ENCODE measurements at regions of chr21 and their contacts with region 1.

Region 1: DNA sequence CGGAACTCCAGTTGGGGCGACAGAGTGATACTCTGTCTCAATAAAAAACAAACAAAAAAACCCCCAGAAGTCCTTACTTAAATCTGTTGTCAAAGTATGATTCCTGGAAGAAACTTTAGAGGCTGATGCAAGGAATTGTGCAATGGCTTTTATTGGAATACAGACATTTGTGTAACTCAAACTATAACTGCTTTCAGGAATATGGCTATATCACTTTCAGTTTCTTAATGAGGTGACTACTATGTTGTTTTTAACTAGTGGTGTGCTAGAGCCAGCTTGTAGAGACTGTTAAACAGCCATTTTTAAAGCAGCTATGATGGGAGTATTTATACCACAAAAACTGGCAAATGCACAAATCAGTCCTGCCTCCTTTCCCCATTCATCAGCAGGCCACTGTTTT is 22.7 kb upstream of the DNAJC28 start:
- DNase-seq: no peak
- ATAC-seq: no peak
- H3K4me3 ChIP-seq: no peak overlapping the region
- H3K27ac ChIP-seq: no peak overlapping the region
- H3K4me1 ChIP-seq: no peaks in the 10 kb centered on the region
- H3K27me3 ChIP-seq: no peaks in the 10 kb centered on the region
- CTCF ChIP-seq: no peak

Region 2: DNA sequence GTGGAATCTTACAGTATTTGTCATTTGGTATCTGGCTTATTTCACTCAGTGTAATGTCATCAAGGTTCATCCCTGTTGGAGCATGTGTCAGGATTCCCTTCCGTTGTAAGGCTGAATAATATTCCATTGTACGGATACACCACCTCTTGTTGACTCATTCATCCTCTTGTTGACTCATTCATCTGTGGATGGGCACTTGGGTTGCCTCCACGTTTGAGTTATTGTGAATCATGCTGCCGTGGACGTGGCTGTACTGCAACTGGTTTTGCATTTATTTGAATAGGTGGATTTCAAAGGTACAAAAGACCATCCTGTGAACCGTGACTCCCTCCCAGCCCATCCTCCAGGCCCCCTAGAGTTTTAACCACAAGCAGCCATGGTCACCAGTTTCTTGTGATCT is 917.0 kb before region 1 on chr21:
- intact Hi-C with region 1: no loop called
- DNase-seq: no peak
- ATAC-seq: peak in 1 of 4 donors; percentile 32
- H3K4me3 ChIP-seq: no peak overlapping the region
- H3K27ac ChIP-seq: no peak overlapping the region
- H3K4me1 ChIP-seq: no peaks in the 10 kb centered on the region
- H3K27me3 ChIP-seq: no peaks in the 10 kb centered on the region
- CTCF ChIP-seq: no peak

Region 3: DNA sequence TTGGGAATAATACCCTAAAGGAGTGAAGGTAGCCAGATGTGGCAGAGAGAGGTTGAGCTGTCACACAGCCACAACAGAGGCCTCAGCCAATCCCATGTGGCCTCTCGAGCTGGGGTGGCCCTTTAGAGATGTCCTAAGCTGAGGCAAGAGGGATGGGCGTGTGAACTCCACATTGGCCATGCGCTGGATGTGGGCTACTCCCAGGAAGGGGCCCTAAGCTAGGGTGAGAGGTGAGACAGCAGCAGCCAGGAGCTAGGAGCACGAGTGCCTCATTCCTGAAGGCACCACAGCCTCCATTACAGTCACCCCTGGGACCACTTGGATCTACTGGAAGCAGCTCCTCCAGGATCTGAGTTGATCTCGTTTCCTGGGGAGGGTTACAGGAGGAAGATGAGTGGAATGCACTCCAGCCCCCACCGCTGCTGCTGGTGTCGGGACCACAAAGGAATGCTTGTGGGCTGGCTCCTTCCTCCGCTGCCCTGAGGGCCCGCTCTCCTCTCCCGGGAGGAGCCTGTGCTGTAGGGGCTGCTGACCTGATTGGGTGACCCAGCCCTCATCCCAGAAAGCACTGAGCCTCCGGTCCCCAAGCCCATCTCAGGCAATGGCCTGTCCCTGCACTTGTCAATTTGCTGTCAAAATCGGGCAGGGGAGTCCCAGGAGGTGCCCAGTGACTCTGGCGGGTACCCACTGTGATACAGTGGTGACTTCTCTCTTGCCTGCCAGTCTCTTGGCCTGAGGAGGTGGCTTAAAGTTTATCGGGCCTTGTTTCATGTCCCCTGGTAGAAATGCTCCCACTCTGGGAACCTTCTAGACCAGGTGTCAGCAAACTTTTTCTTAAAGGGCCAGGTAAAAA is 225.0 kb before region 1 on chr21:
- intact Hi-C with region 1: no loop called
- DNase-seq: no peak
- ATAC-seq: no peak
- H3K4me3 ChIP-seq: no peak overlapping the region
- H3K27ac ChIP-seq: no peak overlapping the region
- H3K4me1 ChIP-seq: no peaks in the 10 kb centered on the region
- H3K27me3 ChIP-seq: no peaks in the 10 kb centered on the region
- CTCF ChIP-seq: no peak

Region 4: GRCh38 chr21:33566514-33566913 is 52.3 kb after region 1 on chr21:
- intact Hi-C with region 1: loop called in 1 of 2 experiments (anchors 10 kb)
- DNase-seq: no peak
- ATAC-seq: no peak
- H3K4me3 ChIP-seq: no peak overlapping the region
- H3K27ac ChIP-seq: no peak overlapping the region
- H3K4me1 ChIP-seq: peaks cover 12% of the 10 kb centered on the region
- H3K27me3 ChIP-seq: no peaks in the 10 kb centered on the region
- CTCF ChIP-seq: no peak

Region 5: DNA sequence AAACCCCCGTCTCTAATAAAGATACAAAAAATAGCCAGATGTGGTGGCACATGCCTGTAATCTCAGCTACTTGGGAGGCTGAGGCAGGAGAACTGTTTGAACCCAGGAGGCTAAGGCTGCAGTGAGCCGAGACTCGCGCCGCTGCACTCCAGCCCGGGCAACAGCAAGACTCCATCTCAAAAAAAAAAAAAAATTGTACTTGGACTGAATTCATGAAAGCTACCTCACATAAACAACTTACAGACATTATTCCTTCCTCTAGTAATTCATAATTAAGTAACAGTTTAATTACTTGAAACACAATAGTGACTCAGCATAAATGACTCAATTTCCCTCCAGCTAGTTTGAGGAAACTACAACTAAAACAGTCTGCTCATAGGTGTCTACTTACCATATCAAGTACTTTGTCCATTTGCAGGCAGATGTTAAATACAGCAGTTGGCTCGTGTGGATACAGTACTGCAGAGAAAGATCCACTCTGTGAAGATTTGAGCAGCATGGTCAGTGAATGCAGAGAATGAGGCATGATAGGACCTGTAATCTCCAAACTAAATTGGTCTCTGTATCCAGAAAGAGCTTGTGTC is 64.8 kb after region 1 on chr21:
- intact Hi-C with region 1: no loop called
- DNase-seq: no peak
- ATAC-seq: peak in 3 of 4 donors; percentile 19 to 28 (median 25)
- H3K4me3 ChIP-seq: no peak overlapping the region
- H3K27ac ChIP-seq: peak overlapping the region; percentile 48
- H3K4me1 ChIP-seq: no peaks in the 10 kb centered on the region
- H3K27me3 ChIP-seq: no peaks in the 10 kb centered on the region
- CTCF ChIP-seq: no peak